ENCODE measurements at regions of chr3 and their contacts with region 1.

Region 1: GRCh38 chr3:134473868-134474546 is 11.8 kb downstream of the ANAPC13 start:
- DNase-seq: peak; percentile 31 to 90 (median 70)
- ATAC-seq: peak; percentile 70 to 86 (median 76)
- H3K4me3 ChIP-seq: no peak overlapping the region
- H3K4me3 Mint-ChIP-seq: no peak overlapping the region
- H3K27ac ChIP-seq: no peak overlapping the region
- H3K27ac Mint-ChIP-seq: no peak overlapping the region
- H3K4me1 ChIP-seq: peaks cover 0 to 3% of the 10 kb centered on the region in 2 experiments
- H3K4me1 Mint-ChIP-seq: peaks cover 0 to 5% (median 3%) of the 10 kb centered on the region in 3 donors
- H3K27me3 ChIP-seq: no peaks in the 10 kb centered on the region
- H3K27me3 Mint-ChIP-seq: no peaks in the 10 kb centered on the region

Region 2: GRCh38 chr3:134212906-134213665 is 260.9 kb before region 1 on chr3:
- CTCF ChIA-PET with region 1: interaction called, 15 to 28 read pairs
- POLR2A ChIA-PET with region 1: no interaction called
- DNase-seq: peak; percentile 48 to 90 (median 80)
- ATAC-seq: peak; percentile 82 to 92 (median 87)
- H3K4me3 ChIP-seq: no peak overlapping the region
- H3K4me3 Mint-ChIP-seq: no peak overlapping the region
- H3K27ac ChIP-seq: no peak overlapping the region
- H3K27ac Mint-ChIP-seq: peak overlapping the region; percentile 1 to 25
- H3K4me1 ChIP-seq: no peaks in the 10 kb centered on the region
- H3K4me1 Mint-ChIP-seq: peaks cover 21 to 27% (median 27%) of the 10 kb centered on the region in 3 donors
- H3K27me3 ChIP-seq: no peaks in the 10 kb centered on the region
- H3K27me3 Mint-ChIP-seq: no peaks in the 10 kb centered on the region

Region 3: GRCh38 chr3:134308350-134308891 is 165.6 kb before region 1 on chr3:
- CTCF ChIA-PET with region 1: interaction called, 14 to 20 read pairs
- POLR2A ChIA-PET with region 1: no interaction called
- DNase-seq: peak; percentile 16 to 84 (median 66)
- ATAC-seq: peak; percentile 77 to 92 (median 82)
- H3K4me3 ChIP-seq: no peak overlapping the region
- H3K4me3 Mint-ChIP-seq: peak overlapping the region in 1 of 3 donors; percentile 3
- H3K27ac ChIP-seq: no peak overlapping the region
- H3K27ac Mint-ChIP-seq: no peak overlapping the region
- H3K4me1 ChIP-seq: peaks cover 0 to 6% of the 10 kb centered on the region in 2 experiments
- H3K4me1 Mint-ChIP-seq: peaks cover 0 to 5% (median 2%) of the 10 kb centered on the region in 3 donors
- H3K27me3 ChIP-seq: peaks cover 0 to 36% of the 10 kb centered on the region in 2 experiments
- H3K27me3 Mint-ChIP-seq: peaks cover 18 to 37% of the 10 kb centered on the region in 2 donors

Region 4: GRCh38 chr3:134485718-134486576 is 11.9 kb after region 1 on chr3 and contains the starts of genes ANAPC13 and CEP63:
- CTCF ChIA-PET with region 1: interaction called, 9 to 21 read pairs
- POLR2A ChIA-PET with region 1: no interaction called
- DNase-seq: peak; percentile 85 to 98 (median 92)
- ATAC-seq: peak; percentile 81 to 89 (median 84)
- H3K4me3 ChIP-seq: peak within 1 kb of the TSS; percentile 92 to 96
- H3K4me3 Mint-ChIP-seq: peak within 1 kb of the TSS; percentile 93 to 98 (median 94)
- H3K27ac ChIP-seq: peak within 1 kb of the TSS; percentile 86
- H3K27ac Mint-ChIP-seq: peak within 1 kb of the TSS; percentile 96 to 98
- H3K4me1 ChIP-seq: peaks cover 21 to 28% of the 10 kb centered on the region in 2 experiments
- H3K4me1 Mint-ChIP-seq: peaks cover 58 to 70% (median 59%) of the 10 kb centered on the region in 3 donors
- H3K27me3 ChIP-seq: no peaks in the 10 kb centered on the region
- H3K27me3 Mint-ChIP-seq: no peaks in the 10 kb centered on the region
- total RNA-seq, gene ANAPC13: 20.7 to 31.8 (median 22.6) TPM
- total RNA-seq, gene CEP63: 21.7 to 26.1 (median 24.6) TPM